ENCODE measurements at regions of chr22 and their contacts with region 1.

Region 1: GRCh38 chr22:21857481-21857914 is 9.9 kb downstream of the MAPK1 start:
- DNase-seq: no peak
- H3K4me3 ChIP-seq: no peak overlapping the region
- H3K27ac ChIP-seq: no peak overlapping the region
- H3K4me1 ChIP-seq: peaks cover 17% of the 10 kb centered on the region
- H3K27me3 ChIP-seq: no peaks in the 10 kb centered on the region
- CTCF ChIP-seq: no peak

Region 2: GRCh38 chr22:21778705-21779363 is 78.7 kb before region 1 on chr22:
- CTCF ChIA-PET with region 1: no interaction called
- dilution Hi-C with region 1: loop called (anchors 5 kb)
- in situ Hi-C with region 1: no loop called
- intact Hi-C with region 1: no loop called
- DNase-seq: peak; percentile 14
- H3K4me3 ChIP-seq: no peak overlapping the region
- H3K27ac ChIP-seq: no peak overlapping the region
- H3K4me1 ChIP-seq: no peaks in the 10 kb centered on the region
- H3K27me3 ChIP-seq: no peaks in the 10 kb centered on the region
- CTCF ChIP-seq: no peak

Region 3: GRCh38 chr22:21791635-21792625 is 65.6 kb before region 1 on chr22:
- CTCF ChIA-PET with region 1: no interaction called
- dilution Hi-C with region 1: no loop called
- in situ Hi-C with region 1: loop called in 1 of 2 experiments (anchors 5 kb)
- intact Hi-C with region 1: no loop called
- DNase-seq: peak; percentile 53
- H3K4me3 ChIP-seq: no peak overlapping the region
- H3K27ac ChIP-seq: peak overlapping the region; percentile 17
- H3K4me1 ChIP-seq: peaks cover 15% of the 10 kb centered on the region
- H3K27me3 ChIP-seq: no peaks in the 10 kb centered on the region
- CTCF ChIP-seq: no peak

Region 4: GRCh38 chr22:21807544-21808529 is 49.7 kb before region 1 on chr22:
- CTCF ChIA-PET with region 1: no interaction called
- dilution Hi-C with region 1: loop called (anchors 10 kb)
- in situ Hi-C with region 1: no loop called
- intact Hi-C with region 1: loop called (anchors 10 kb)
- DNase-seq: no peak
- H3K4me3 ChIP-seq: no peak overlapping the region
- H3K27ac ChIP-seq: no peak overlapping the region
- H3K4me1 ChIP-seq: no peaks in the 10 kb centered on the region
- H3K27me3 ChIP-seq: no peaks in the 10 kb centered on the region
- CTCF ChIP-seq: no peak

Region 5: DNA sequence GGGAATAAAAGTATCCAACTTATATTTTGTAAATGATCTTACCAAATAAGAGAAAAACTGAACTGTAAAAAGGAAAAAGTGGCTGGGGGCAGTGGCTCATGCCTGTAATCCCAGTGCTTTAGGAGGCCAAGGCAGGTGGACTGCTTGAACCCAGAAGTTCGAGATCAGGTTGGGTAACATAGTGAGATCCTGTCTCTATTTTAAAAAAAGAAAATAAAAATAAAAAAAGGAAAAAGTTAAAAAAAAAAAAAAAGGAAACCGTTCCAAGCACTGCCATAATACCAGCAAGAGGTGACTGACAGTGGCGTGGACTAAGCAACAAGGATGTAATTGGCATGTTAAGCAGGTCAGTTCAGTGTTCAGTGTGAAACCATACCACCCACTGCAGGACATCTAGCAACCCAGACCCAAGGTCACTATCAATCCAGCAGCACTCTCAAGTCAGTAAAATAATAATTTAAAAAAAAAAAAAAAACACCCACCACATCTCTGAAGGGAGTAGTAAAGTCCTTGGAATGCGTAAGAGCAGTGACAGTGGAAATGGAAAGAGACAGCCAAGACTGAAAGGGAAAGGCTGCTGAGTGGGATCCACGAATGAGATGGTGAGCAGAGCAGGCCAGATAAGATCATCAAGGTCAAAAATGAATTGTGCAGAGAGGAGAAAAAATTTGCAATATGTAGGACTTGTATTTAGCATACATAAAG is 33.6 kb before region 1 on chr22:
- CTCF ChIA-PET with region 1: no interaction called
- dilution Hi-C with region 1: loop called (anchors 5 kb)
- in situ Hi-C with region 1: no loop called
- intact Hi-C with region 1: loop called (anchors 10 kb)
- DNase-seq: no peak
- H3K4me3 ChIP-seq: no peak overlapping the region
- H3K27ac ChIP-seq: no peak overlapping the region
- H3K4me1 ChIP-seq: peaks cover 8% of the 10 kb centered on the region
- H3K27me3 ChIP-seq: no peaks in the 10 kb centered on the region
- CTCF ChIP-seq: no peak

Region 6: GRCh38 chr22:21927174-21927823 is 69.8 kb after region 1 on chr22:
- CTCF ChIA-PET with region 1: no interaction called
- dilution Hi-C with region 1: loop called (anchors 5 kb)
- in situ Hi-C with region 1: no loop called
- intact Hi-C with region 1: no loop called
- DNase-seq: no peak
- H3K4me3 ChIP-seq: no peak overlapping the region
- H3K27ac ChIP-seq: no peak overlapping the region
- H3K4me1 ChIP-seq: no peaks in the 10 kb centered on the region
- H3K27me3 ChIP-seq: no peaks in the 10 kb centered on the region
- CTCF ChIP-seq: no peak

Region 7: GRCh38 chr22:22074634-22075381 is 217.3 kb after region 1 on chr22:
- CTCF ChIA-PET with region 1: no interaction called
- dilution Hi-C with region 1: no loop called
- in situ Hi-C with region 1: no loop called
- intact Hi-C with region 1: no loop called
- DNase-seq: peak; percentile 48
- H3K4me3 ChIP-seq: no peak overlapping the region
- H3K27ac ChIP-seq: peak overlapping the region; percentile 63
- H3K4me1 ChIP-seq: peaks cover 43% of the 10 kb centered on the region
- H3K27me3 ChIP-seq: no peaks in the 10 kb centered on the region
- CTCF ChIP-seq: peak in 1 of 2 donors; percentile 40

Region 8: GRCh38 chr22:22144858-22145257 is 287.4 kb after region 1 on chr22:
- CTCF ChIA-PET with region 1: no interaction called
- dilution Hi-C with region 1: no loop called
- in situ Hi-C with region 1: no loop called
- intact Hi-C with region 1: no loop called
- DNase-seq: no peak
- H3K4me3 ChIP-seq: no peak overlapping the region
- H3K27ac ChIP-seq: no peak overlapping the region
- H3K4me1 ChIP-seq: no peaks in the 10 kb centered on the region
- H3K27me3 ChIP-seq: peaks cover 3% of the 10 kb centered on the region
- CTCF ChIP-seq: peak; percentile 19 to 28

Measured in mammary epithelial cell (primary cell).